ENCODE measurements at regions of chr3 and their contacts with region 1.

Region 1: DNA sequence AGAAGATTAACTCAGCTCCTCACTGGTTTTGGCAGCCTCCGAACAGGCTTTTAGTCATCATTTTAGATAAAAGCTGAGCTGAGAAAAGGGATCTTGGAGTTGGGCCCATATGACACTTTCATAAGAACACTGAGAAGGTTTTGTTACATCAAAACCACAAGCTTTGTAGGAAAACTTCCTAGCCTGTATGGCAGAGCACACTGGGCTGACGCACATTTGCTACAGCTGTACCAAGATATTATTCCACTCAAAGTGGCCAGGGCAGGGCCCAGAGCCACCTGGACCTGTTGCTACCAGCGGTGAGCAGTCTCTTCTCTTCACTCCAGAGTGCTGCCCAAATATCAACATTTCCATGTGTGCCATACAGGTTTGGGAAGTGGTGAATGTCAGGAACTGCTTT is 160.5 kb upstream of the CCDC54 start:
- DNase-seq: no peak
- ATAC-seq: peak; percentile 61 to 71
- H3K4me3 ChIP-seq: no peak overlapping the region
- H3K27ac ChIP-seq: peak overlapping the region; percentile 51 to 75; a peak in 5 of 6 replicates
- H3K4me1 ChIP-seq: peaks cover 23% of the 10 kb centered on the region; the same call in 2 of the 3 replicates
- CTCF ChIP-seq: no peak
- EP300 ChIP-seq: no peak
- POLR2A ChIP-seq: no peak
- RAD21 ChIP-seq: no peak

Region 2: DNA sequence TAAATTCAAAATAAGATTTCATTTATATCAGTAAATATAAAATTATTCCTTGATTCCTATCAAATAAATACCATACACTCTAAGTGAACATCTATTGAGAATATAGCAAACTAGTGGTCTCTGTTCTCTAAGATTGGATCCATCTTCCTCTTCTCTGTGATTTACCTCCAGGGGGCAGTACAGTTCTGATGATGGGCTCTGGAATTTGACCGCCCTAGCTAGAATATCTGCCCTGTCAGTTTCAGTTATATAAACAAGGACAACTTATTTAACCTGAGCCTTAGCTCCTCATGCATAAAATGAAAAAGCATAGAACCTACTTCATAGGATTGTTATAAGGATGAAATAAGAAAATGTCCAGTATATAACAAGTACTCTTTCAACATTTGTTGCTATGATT is 10.6 kb before region 1 on chr3:
- CTCF ChIA-PET with region 1: interaction called, 10 read pairs
- POLR2A ChIA-PET with region 1: interaction called, 6 read pairs
- DNase-seq: peak; percentile 36 to 51
- ATAC-seq: peak in 1 of 2 experiments; percentile 85; a peak in 3 of 6 replicates
- H3K4me3 ChIP-seq: no peak overlapping the region
- H3K27ac ChIP-seq: no peak overlapping the region
- H3K4me1 ChIP-seq: peaks cover 29% of the 10 kb centered on the region
- CTCF ChIP-seq: peak; percentile 56
- EP300 ChIP-seq: no peak
- POLR2A ChIP-seq: no peak
- RAD21 ChIP-seq: peak; percentile 56 to 69; a peak in 4 of 5 replicates